ENCODE measurements at regions of chr13 and their contacts with region 1.

Region 1: GRCh38 chr13:110463871-110464510 is 97.5 kb downstream of the RAB20 start:
- H3K4me3 Mint-ChIP-seq: no peak overlapping the region
- H3K27ac Mint-ChIP-seq: peak overlapping the region; percentile 88
- H3K4me1 Mint-ChIP-seq: peaks cover 36% of the 10 kb centered on the region
- H3K27me3 Mint-ChIP-seq: peaks cover 60% of the 10 kb centered on the region

Region 2: DNA sequence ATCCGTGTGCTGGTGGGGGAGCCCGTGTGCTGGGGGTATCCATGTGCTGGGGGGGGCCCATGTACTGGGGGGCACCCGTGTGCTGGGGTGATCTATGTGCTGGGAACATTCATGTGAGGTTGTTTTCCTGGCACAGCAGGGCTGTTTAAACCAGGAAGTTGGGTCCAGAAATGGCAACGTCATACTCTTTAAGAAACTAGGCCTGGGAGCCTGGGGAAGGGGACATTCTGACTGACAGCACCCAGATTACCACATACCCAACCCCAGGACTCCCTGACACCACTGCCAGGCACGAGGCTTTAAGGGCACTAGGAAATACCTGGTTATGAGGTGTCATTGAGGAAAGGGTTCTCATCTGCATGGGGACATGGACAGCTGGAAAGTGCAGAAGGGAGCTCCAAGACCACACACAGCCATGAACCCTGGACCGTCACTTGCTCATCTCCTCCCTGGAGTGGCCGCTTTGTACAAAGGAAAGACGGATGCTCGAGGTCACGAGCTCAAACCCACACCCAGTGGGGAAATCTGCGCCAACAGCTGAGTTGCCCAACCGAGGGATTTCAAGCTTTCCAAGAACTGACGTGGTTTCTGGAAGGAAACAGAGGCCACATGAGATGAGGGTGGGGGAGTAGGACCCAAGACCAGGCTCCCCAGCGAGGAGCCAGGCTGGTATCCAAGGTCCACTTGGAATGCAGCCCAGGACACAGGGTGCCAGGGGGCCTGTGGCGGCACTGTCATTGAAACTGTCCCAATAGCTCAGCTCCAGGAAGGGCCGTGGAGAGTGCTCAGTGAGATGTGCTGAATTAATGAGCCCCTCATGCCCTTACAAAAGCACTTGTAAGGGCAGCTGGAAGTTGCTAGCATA is 56.7 kb after region 1 on chr13:
- intact Hi-C with region 1: loop called (anchors 5 kb)
- H3K4me3 Mint-ChIP-seq: peak overlapping the region; percentile 42
- H3K27ac Mint-ChIP-seq: peak overlapping the region; percentile 94
- H3K4me1 Mint-ChIP-seq: peaks cover 82% of the 10 kb centered on the region
- H3K27me3 Mint-ChIP-seq: peaks cover 6% of the 10 kb centered on the region

Region 3: GRCh38 chr13:110546930-110547329 is 82.9 kb after region 1 on chr13:
- intact Hi-C with region 1: no loop called
- H3K4me3 Mint-ChIP-seq: no peak overlapping the region
- H3K27ac Mint-ChIP-seq: peak overlapping the region; percentile 30
- H3K4me1 Mint-ChIP-seq: peaks cover 60% of the 10 kb centered on the region
- H3K27me3 Mint-ChIP-seq: no peaks in the 10 kb centered on the region

Region 4: GRCh38 chr13:110575322-110576069 is 111.5 kb after region 1 on chr13:
- intact Hi-C with region 1: loop called (anchors 5 kb)
- H3K4me3 Mint-ChIP-seq: no peak overlapping the region
- H3K27ac Mint-ChIP-seq: peak overlapping the region; percentile 1
- H3K4me1 Mint-ChIP-seq: peaks cover 36% of the 10 kb centered on the region
- H3K27me3 Mint-ChIP-seq: peaks cover 40% of the 10 kb centered on the region

Measured in dendritic cell treated with granulocyte-macrophage colony-stimulating factor and Interleukin-4, amounts not matched to agents 40 ng/mL and 50 ng/mL, for 4 days (primary cell).